ENCODE measurements at regions of chr16 and their contacts with region 1.

Region 1: GRCh38 chr16:30445408-30446202 is at the start of gene SEPHS2:
- DNase-seq: peak; percentile 96 to 98 (median 98)
- ATAC-seq: peak; percentile 92 to 98 (median 98)
- H3K4me3 ChIP-seq: peak within 1 kb of the TSS; percentile 72 to 97 (median 86)
- H3K27ac ChIP-seq: peak within 1 kb of the TSS; percentile 91 to 100 (median 97)
- H3K4me1 ChIP-seq: peaks cover 0 to 36% (median 17%) of the 10 kb centered on the region in 12 donors
- H3K27me3 ChIP-seq: no peaks in the 10 kb centered on the region
- CTCF ChIP-seq: peak in 11 of 12 donors; percentile 21 to 69 (median 44)
- POLR2A ChIP-seq: peak in 1 of 2 donors; percentile 94
- total RNA-seq, gene SEPHS2: 15.1 to 46.2 (median 30.0) TPM

Region 2: DNA sequence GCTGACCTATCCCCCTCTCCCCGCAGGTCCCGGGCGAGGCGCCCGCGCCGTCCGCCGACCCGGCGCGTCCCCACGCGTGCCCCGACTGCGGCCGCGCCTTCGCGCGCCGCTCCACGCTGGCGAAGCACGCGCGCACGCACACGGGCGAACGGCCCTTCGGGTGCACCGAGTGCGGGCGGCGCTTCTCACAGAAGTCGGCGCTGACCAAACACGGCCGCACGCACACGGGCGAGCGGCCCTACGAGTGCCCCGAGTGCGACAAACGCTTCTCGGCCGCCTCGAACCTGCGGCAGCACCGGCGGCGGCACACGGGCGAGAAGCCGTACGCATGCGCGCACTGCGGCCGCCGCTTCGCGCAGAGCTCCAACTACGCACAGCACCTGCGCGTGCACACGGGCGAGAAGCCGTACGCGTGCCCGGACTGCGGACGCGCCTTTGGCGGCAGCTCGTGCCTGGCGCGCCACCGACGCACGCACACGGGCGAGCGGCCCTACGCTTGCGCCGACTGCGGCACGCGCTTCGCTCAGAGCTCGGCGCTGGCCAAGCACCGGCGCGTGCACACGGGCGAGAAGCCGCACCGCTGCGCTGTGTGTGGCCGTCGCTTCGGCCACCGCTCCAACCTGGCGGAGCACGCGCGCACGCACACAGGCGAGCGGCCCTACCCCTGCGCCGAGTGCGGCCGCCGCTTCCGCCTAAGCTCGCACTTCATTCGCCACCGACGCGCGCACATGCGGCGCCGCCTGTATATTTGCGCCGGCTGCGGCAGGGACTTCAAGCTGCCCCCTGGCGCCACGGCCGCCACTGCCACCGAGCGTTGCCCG is 27.9 kb before region 1 on chr16:
- intact Hi-C with region 1: no loop called
- DNase-seq: peak; percentile 84 to 93 (median 87)
- ATAC-seq: peak; percentile 89 to 96 (median 92)
- H3K4me3 ChIP-seq: peak overlapping the region; percentile 38 to 76 (median 64)
- H3K27ac ChIP-seq: peak overlapping the region; percentile 14 to 91 (median 77)
- H3K4me1 ChIP-seq: peaks cover 0 to 27% (median 10%) of the 10 kb centered on the region in 12 donors
- H3K27me3 ChIP-seq: no peaks in the 10 kb centered on the region
- CTCF ChIP-seq: peak in 7 of 12 donors; percentile 12 to 46 (median 28)
- POLR2A ChIP-seq: peak in 1 of 2 donors; percentile 45

Region 3: DNA sequence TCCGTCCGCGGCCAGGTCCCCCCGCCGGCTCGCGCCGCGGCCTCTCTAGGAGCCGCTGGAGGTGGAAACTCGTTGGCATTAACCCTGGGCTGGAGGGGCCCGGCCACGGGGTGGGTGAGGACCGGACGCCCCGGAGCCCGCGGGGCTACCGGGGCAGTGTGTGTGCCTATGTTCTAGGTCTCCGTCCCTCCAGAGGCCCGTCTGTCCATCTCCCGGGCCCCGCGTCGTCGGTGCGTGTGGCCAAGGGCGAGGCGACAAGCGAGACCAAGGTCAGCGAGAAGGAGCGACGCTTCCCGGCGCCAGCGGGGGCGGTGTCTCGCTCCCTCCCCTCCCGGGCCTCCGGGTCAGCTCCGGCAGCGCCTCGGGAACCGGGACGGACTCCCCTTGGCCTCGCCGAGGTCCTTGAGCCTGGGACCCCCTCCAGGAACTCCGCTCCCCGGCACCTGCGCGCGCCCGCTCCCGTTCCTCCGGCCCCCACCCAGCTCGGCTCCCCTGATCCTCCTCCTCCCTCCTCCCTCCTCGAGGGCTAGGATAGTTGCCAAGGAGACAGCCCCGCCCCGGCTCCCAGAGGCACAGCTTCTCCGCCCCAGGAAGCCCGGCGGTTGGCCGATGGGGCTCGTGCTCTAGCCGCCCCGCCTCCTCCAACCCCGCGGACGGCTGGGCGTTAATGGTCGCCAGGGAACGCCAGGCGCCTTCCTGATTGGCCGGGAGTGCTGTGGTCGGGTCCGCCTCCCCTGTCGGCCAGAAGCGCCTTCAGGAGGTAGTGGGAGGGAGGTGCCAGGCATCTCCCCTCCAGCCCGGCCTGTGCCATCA is 81.4 kb after region 1 on chr16:
- intact Hi-C with region 1: loop called in 9 of 10 experiments (anchors 2 to 5 kb)
- DNase-seq: peak; percentile 99 to 100 (median 99)
- ATAC-seq: peak; percentile 93 to 97 (median 94)
- H3K4me3 ChIP-seq: peak overlapping the region; percentile 35 to 98 (median 86)
- H3K27ac ChIP-seq: peak overlapping the region; percentile 95 to 100 (median 99)
- H3K4me1 ChIP-seq: peaks cover 0 to 44% (median 19%) of the 10 kb centered on the region in 12 donors
- H3K27me3 ChIP-seq: no peaks in the 10 kb centered on the region
- CTCF ChIP-seq: peak in 10 of 12 donors; percentile 5 to 53 (median 28)
- POLR2A ChIP-seq: peak; percentile 38 to 86

Region 4: DNA sequence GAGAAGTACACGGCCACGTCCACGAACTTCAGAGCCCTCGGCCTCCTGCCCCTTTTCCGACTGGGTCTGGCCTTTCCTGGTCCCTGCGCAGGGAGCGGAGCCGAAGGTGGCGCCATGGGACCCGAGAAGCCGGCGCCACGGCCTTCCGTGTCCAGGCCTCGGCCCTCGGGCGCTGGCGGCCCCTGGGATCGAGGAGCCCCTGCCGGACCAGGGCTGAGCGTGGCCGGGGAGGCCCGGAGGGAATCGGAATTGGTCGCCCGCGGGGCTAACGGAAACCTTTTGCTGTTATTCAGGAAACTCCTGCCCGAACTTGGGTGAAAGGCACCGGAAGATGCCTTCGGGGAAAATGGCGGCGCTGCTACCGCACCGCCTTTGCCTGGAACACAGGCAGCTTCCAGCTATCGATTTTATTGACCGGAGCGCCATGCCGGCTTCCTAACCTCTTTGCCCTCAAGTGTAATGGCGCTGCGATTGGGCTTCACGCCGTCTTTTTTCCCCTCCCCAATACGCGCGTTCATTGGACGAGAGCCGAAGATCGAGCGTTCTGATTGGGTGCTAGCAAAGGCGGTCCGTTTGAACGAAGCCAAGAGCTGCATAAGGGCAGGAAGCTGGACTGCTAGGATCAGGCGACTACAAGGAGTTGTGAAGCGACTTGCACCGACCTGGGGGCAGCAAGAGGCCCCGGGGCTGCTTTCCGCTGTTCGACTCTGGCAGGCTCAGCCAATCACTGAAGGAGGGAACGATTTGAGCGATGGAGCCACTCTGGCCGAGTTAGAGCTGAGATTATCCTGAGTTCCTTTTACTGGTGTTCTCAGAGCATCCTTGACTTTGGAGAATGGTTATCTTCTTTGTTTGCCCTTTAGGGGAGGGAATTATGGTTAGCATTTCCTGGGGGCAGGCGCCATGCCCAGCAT is 164.6 kb after region 1 on chr16 and contains the start of gene ZNF689:
- intact Hi-C with region 1: loop called in 6 of 10 experiments (anchors 5 to 10 kb)
- DNase-seq: peak; percentile 93 to 95 (median 94)
- ATAC-seq: peak; percentile 95 to 99 (median 97)
- H3K4me3 ChIP-seq: peak within 1 kb of the TSS; percentile 64 to 99 (median 88)
- H3K27ac ChIP-seq: peak within 1 kb of the TSS; percentile 84 to 99 (median 97)
- H3K4me1 ChIP-seq: peaks cover 0 to 47% (median 10%) of the 10 kb centered on the region in 12 donors
- H3K27me3 ChIP-seq: no peaks in the 10 kb centered on the region
- CTCF ChIP-seq: peak in 1 of 12 donors; percentile 10
- POLR2A ChIP-seq: peak in 1 of 2 donors; percentile 50
- total RNA-seq, gene ZNF689: 4.0 to 7.9 (median 6.6) TPM

Region 5: GRCh38 chr16:30615358-30616091 is 169.9 kb after region 1 on chr16:
- intact Hi-C with region 1: loop called in 4 of 10 experiments (anchors 5 to 10 kb)
- DNase-seq: peak; percentile 19 to 75 (median 48)
- ATAC-seq: peak in 3 of 4 donors; percentile 64 to 76 (median 72)
- H3K4me3 ChIP-seq: no peak overlapping the region
- H3K27ac ChIP-seq: no peak overlapping the region
- H3K4me1 ChIP-seq: peaks cover 0 to 12% (median 0%) of the 10 kb centered on the region in 12 donors
- H3K27me3 ChIP-seq: no peaks in the 10 kb centered on the region
- CTCF ChIP-seq: peak in 11 of 12 donors; percentile 30 to 57 (median 45)
- POLR2A ChIP-seq: no peak

Measured in heart left ventricle (tissue), 16 donors.